WTC11 (cell line): ENCODE measurements at regions of chrX and their contacts with region 1.

Region 1: GRCh38 chrX:46796574-46797191 is 37.8 kb upstream of the SLC9A7 start:
- DNase-seq: peak; percentile 77
- ATAC-seq: peak; percentile 69
- H3K4me3 Mint-ChIP-seq: no peak overlapping the region
- H3K27ac Mint-ChIP-seq: no peak overlapping the region
- H3K4me1 Mint-ChIP-seq: peaks cover 11% of the 10 kb centered on the region
- H3K27me3 Mint-ChIP-seq: no peaks in the 10 kb centered on the region; the same call in 1 of the 2 replicates
- CTCF ChIP-seq: peak; percentile 41

Region 2: DNA sequence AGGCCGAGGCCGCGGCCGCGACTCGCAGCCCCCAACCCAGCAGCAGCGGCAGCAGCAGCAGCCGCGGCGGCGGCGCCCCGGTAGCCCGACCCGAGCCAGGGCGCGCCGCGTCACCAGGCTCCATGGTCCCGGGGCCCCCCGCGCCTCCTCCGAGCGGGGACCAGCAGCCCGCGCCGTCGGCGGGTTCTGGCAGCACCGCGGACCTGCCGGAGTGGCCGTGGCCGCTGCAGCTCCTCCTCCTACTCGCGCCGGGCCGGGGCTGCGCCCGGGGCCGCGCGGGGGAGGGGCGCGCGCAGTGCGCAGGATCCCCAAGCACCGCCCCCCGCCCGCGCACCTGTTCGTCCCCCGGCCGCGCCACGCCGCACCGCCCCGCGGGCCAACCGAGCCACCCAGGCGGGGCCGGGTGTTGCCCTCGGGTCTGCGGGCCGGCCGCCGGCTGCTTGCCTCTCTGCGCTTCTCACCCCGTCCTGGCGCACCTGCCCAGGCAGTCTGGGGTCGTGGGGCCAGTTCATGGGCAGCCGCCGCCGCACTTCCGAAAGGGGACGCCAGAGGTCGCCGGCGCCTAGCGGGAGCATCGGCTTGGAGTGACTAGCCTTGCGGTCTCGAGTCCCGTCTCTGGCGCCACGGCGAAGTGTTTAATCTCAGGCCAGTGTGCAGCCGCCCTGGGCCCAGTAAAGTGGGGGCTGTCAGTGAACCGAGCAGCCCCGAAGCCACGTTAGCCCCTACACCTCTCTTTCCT is 37.6 kb before region 1 on chrX and contains the start of gene SLC9A7:
- CTCF ChIA-PET with region 1: interaction called, 19 read pairs
- POLR2A ChIA-PET with region 1: no interaction called
- DNase-seq: peak; percentile 84
- ATAC-seq: peak; percentile 83
- H3K4me3 Mint-ChIP-seq: peak within 1 kb of the TSS; percentile 94
- H3K27ac Mint-ChIP-seq: peak within 1 kb of the TSS; percentile 89
- H3K4me1 Mint-ChIP-seq: peaks cover 38% of the 10 kb centered on the region
- H3K27me3 Mint-ChIP-seq: no peaks in the 10 kb centered on the region
- CTCF ChIP-seq: peak; percentile 77
- total RNA-seq, gene SLC9A7: 16.2 to 18.4 TPM (median 18.0 TPM) in 3 replicates